GM18951 (cell line): ENCODE measurements at regions of chr4 and their contacts with region 1.

Region 1: DNA sequence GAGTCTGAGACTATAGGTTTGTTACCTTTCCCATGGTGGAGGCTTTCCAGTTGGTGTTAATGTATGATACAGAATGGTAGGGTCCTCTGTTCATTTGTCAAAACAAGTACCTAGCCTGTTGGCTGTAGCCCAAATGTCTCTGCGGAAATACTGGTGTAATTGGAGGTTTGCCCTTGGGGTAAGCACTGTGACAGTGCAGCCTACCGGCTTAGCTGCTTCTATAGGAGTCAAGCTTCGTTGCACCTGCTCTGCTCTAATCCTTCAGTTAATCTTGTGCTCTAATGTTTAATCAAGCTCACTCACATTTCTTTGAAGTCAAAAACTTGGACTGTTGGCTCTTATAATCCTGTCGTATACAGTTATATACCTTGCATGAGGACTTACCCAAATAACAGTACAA is 203.4 kb downstream of the CCNG2 start:
- POLR2A ChIP-seq: no peak

Region 2: DNA sequence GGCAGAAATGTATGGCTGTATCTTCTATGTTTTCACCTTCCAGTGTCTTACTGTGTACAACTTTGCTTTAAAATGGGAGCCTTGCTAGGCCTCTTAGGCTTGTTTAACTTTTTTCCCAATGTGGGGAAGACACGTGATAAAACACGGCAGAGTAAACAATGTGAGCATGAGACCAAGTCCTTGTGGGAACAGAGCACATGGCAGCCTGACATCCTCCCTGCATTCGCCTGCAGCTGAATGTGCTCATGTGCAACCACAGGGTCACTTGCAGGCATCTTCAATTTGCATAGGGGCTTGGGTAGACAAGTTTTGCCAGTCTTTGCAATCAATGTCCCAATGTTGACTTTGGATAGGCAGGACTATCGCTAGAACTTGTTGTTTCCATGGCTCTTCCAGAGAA is 111.6 kb before region 1 on chr4:
- in situ Hi-C with region 1: loop called (anchors 5 kb)
- POLR2A ChIP-seq: no peak

Region 3: GRCh38 chr4:77473509-77473908 is 113.1 kb after region 1 on chr4:
- in situ Hi-C with region 1: no loop called
- POLR2A ChIP-seq: no peak